Endothelial cell of umbilical vein (primary cell): ENCODE measurements at regions of chr7 and their contacts with region 1.

Region 1: GRCh38 chr7:35624299-35625186 is 70.4 kb downstream of the HERPUD2 start:
- DNase-seq: peak; percentile 49
- H3K4me3 ChIP-seq: no peak overlapping the region
- H3K27ac ChIP-seq: no peak overlapping the region
- H3K4me1 ChIP-seq: no peaks in the 10 kb centered on the region
- H3K27me3 ChIP-seq: no peaks in the 10 kb centered on the region
- CTCF ChIP-seq: peak; percentile 68 to 79
- POLR2A ChIP-seq: no peak

Region 2: DNA sequence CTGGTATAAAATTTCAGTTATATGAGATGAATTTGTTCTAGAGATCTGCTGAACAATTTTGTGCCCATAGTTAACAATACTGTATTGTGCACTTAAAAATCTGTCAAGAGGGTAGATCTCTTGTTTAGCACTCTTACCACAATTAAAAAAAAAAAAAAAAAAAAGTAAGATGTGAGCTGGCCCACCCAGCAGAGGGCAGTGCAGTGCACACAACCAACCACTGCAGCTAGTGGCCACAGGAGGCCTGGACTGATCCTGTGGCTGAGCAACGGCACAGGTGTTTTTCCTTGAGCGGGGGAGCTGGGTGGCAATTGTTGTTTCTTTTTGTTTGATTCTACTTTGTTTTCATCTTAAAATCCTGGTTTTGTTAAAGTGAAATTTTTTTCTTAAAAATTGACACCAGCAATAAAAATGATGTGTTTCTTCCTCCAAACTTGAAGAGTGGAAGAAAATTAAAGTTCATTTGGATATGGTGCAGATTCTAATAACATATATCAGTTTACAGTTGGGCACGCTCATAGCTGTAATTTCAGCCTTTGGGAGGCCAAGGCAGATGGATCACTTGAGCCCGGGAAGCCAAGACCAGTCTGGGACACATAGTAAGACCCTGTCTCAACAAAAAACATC is 199.6 kb before region 1 on chr7:
- CTCF ChIA-PET with region 1: interaction called, 108 read pairs
- POLR2A ChIA-PET with region 1: no interaction called
- dilution Hi-C with region 1: no loop called
- intact Hi-C with region 1: loop called (anchors 1 kb)
- DNase-seq: peak; percentile 53
- H3K4me3 ChIP-seq: no peak overlapping the region
- H3K27ac ChIP-seq: no peak overlapping the region
- H3K4me1 ChIP-seq: no peaks in the 10 kb centered on the region
- H3K27me3 ChIP-seq: peaks cover 0 to 5% of the 10 kb centered on the region in 2 experiments
- CTCF ChIP-seq: peak; percentile 68 to 79
- POLR2A ChIP-seq: no peak

Region 3: GRCh38 chr7:35537067-35538023 is 87.2 kb before region 1 on chr7:
- CTCF ChIA-PET with region 1: interaction called, 5 read pairs
- POLR2A ChIA-PET with region 1: no interaction called
- dilution Hi-C with region 1: no loop called
- intact Hi-C with region 1: loop called (anchors 1 kb)
- DNase-seq: peak; percentile 70
- H3K4me3 ChIP-seq: peak overlapping the region in 1 of 3 experiments; percentile 28
- H3K27ac ChIP-seq: no peak overlapping the region
- H3K4me1 ChIP-seq: no peaks in the 10 kb centered on the region
- H3K27me3 ChIP-seq: peaks cover 0 to 5% of the 10 kb centered on the region in 2 experiments
- CTCF ChIP-seq: peak; percentile 92 to 99
- POLR2A ChIP-seq: no peak

Region 4: DNA sequence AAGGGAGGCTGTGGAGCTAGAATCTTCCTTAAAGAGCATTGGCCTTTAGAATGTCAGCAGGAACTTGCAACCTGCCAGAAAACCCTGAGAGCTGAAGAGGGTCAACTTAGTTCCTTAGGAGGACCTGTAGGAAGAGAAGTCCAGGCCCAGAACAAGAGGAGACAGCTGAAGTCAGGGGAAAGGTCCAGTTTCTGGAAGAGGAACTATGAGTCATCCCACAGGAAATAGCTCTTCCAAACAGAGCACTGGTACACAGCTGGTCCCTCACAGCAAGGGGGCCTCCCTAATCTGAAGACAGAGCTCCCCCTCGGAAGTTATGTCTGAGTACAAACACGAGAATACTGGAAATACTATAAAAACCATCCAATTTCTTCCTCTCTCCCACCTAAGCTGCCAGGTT is 28.5 kb before region 1 on chr7:
- CTCF ChIA-PET with region 1: interaction called, 23 read pairs
- POLR2A ChIA-PET with region 1: interaction called, 3 read pairs
- dilution Hi-C with region 1: no loop called
- intact Hi-C with region 1: no loop called
- DNase-seq: peak; percentile 31
- H3K4me3 ChIP-seq: no peak overlapping the region
- H3K27ac ChIP-seq: peak overlapping the region; percentile 23
- H3K4me1 ChIP-seq: peaks cover 12% of the 10 kb centered on the region
- H3K27me3 ChIP-seq: no peaks in the 10 kb centered on the region
- CTCF ChIP-seq: no peak
- POLR2A ChIP-seq: no peak

Region 5: GRCh38 chr7:35906191-35906908 is 281.8 kb after region 1 on chr7:
- CTCF ChIA-PET with region 1: interaction called, 18 read pairs
- POLR2A ChIA-PET with region 1: no interaction called
- dilution Hi-C with region 1: no loop called
- intact Hi-C with region 1: loop called (anchors 2 kb)
- DNase-seq: peak; percentile 84
- H3K4me3 ChIP-seq: no peak overlapping the region
- H3K27ac ChIP-seq: no peak overlapping the region
- H3K4me1 ChIP-seq: no peaks in the 10 kb centered on the region
- H3K27me3 ChIP-seq: no peaks in the 10 kb centered on the region
- CTCF ChIP-seq: peak; percentile 70 to 77
- POLR2A ChIP-seq: no peak

Region 6: GRCh38 chr7:36207451-36208291 is 583.1 kb after region 1 on chr7:
- CTCF ChIA-PET with region 1: no interaction called
- POLR2A ChIA-PET with region 1: no interaction called
- dilution Hi-C with region 1: no loop called
- intact Hi-C with region 1: no loop called
- DNase-seq: no peak
- H3K4me3 ChIP-seq: no peak overlapping the region
- H3K27ac ChIP-seq: no peak overlapping the region
- H3K4me1 ChIP-seq: no peaks in the 10 kb centered on the region
- H3K27me3 ChIP-seq: peaks cover 0 to 4% of the 10 kb centered on the region in 2 experiments
- CTCF ChIP-seq: no peak
- POLR2A ChIP-seq: no peak